ENCODE measurements at regions of chr15 and their contacts with region 1.

Region 1: GRCh38 chr15:81400640-81401236 is 26.7 kb upstream of the TMC3 start:
- DNase-seq: no peak
- H3K4me3 Mint-ChIP-seq: no peak overlapping the region
- H3K27ac Mint-ChIP-seq: no peak overlapping the region
- H3K4me1 Mint-ChIP-seq: no peaks in the 10 kb centered on the region
- H3K27me3 Mint-ChIP-seq: no peaks in the 10 kb centered on the region

Region 2: GRCh38 chr15:81155375-81156218 is 245.1 kb before region 1 on chr15:
- CTCF ChIA-PET with region 1: no interaction called
- intact Hi-C with region 1: loop called (anchors 2 kb)
- DNase-seq: peak; percentile 35
- H3K4me3 Mint-ChIP-seq: no peak overlapping the region
- H3K27ac Mint-ChIP-seq: no peak overlapping the region
- H3K4me1 Mint-ChIP-seq: peaks cover under 1% of the 10 kb centered on the region
- H3K27me3 Mint-ChIP-seq: no peaks in the 10 kb centered on the region

Region 3: GRCh38 chr15:81357223-81357622 is 43.5 kb before region 1 on chr15:
- CTCF ChIA-PET with region 1: no interaction called
- intact Hi-C with region 1: no loop called
- DNase-seq: no peak
- H3K4me3 Mint-ChIP-seq: no peak overlapping the region
- H3K27ac Mint-ChIP-seq: no peak overlapping the region
- H3K4me1 Mint-ChIP-seq: no peaks in the 10 kb centered on the region
- H3K27me3 Mint-ChIP-seq: no peaks in the 10 kb centered on the region